ENCODE measurements at regions of chr2 and their contacts with region 1.

Region 1: GRCh38 chr2:56183643-56184499 is at the start of gene CCDC85A:
- DNase-seq: peak; percentile 94
- total RNA-seq, gene CCDC85A: 2.8 to 3.1 TPM

Region 2: DNA sequence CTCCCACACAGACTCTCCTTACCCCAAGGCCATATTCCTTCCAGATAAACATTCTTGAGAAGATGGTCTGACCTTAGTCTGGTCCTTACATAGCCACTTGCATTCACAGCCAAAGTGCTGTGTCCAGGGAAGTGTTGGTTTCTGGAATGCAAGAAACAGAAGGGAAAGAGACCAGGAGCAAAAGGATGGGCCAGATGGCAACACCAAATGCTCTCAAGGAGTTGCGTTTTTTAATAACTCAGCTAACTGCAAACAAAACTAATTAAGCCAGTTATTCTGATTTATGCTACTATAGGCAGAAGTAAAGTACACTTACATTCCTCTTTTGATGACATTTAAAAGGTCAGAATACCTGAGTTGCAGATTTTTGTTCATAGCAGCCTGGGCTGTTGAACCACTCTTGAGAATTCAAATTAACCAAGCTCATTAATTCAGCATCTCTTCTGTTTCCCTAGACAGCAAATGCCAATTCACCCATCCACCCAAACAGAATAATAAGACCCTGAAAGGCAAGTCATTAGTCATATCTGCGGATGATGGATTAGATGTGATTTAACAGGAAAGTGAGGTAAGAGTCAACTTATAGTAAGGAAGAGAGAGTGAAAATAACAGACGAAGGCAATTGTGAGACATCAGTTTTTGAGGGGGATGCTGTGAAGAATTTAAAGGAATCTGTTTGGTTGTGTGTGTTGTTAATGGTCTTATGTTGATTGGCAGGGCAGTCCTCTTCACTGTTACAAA is 18.7 kb after region 1 on chr2:
- intact Hi-C with region 1: no loop called
- DNase-seq: no peak

Region 3: GRCh38 chr2:56741601-56742102 is 557.8 kb after region 1 on chr2:
- intact Hi-C with region 1: loop called in 1 of 2 experiments (anchors 5 kb)
- DNase-seq: no peak

Region 4: DNA sequence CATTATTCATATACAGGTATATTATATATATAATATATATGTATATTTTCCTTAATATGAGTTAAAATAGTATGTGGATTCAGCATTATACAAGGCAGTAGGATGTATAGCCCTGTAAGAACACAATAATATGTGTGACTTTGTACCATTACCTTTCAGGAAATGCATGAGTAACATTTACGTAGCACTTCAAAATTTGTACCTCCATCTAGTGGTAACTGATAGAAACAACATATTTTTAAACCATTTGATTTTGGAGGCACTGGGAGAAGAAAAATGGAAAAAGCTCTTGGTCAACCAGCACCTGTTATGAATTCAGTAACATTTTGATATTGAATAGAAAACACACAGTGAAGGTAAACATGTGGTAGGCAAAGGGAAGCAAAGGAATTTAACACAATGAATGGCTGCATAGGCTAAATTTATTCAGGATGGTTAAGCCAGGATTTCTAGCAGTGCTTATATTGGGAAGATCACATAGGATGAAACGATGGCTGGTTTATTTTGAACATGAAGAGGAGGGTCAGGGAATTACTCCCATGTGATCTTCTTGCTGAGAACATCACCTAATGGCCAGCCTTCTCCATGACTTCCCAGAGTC is 565.4 kb after region 1 on chr2:
- intact Hi-C with region 1: loop called (anchors 2 to 5 kb)
- DNase-seq: no peak

Region 5: DNA sequence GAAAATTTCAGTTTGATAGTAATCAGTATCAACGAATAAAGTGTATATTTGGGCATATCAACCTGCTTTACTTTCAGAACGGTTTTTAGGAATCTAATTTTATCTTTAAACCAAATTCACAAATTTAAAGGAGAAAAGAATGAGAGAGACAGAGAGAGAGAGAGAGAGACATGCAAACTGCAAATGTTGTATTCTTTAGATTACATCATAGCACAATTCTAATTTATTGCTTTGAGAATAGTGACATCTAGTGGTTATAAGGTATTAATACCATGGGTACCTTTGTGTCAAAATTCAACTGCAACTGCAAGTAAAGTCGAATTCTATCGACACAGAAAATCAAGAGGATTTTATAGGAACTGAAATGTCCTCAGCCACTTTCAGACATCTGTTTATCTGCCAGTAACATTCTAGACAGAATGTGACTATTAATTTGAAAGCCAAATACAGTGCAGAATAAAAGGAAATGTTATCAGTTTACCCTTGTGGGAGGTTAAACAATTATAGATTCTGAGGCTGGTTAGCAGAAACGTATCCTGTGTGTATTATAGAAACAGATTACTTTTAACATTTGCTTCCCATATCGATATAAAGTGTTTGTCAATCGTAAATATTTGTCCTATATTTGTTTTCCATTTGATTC is 1332.9 kb after region 1 on chr2:
- intact Hi-C with region 1: loop called in 1 of 2 experiments (anchors 10 kb)
- DNase-seq: no peak